Naive thymus-derived CD4-positive, alpha-beta T cell (primary cell): ENCODE measurements at regions of chr14 and their contacts with region 1.

Region 1: DNA sequence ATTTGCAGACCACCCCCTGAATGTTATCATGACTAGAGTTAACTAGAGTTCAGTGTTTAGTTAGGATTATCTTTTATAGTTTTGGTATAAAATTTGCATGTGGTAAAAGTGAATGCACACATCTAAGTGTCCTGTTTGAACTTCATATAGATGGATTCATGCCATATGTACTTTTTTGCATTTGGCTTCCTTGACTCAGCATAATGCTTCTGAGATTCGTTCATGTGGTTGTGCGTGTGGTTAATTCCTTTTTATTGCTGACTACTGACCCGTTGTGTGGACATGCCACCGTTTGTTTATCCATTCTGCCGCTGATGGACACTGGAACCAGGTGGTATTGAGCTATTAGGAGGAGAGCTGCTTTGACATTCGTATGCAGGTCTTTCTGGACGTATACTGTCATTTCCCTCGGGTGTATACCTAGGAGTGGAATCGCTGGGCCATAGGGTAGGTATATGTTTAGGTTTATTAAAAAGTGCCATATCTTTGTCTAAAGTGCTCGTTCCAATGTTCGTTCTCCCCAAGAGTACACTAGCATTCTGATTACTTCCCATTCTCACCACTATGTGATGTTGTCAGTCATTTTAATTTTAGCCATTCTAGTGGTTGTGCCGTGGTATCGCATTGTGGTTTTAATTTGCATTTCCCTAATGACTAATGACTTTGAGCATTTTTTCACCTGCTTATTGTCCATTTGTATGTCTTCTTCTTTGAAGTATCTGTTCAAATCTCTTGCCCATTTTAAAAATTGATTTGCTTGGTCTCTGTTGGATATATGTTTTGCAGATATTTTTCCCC is 37.7 kb downstream of the RIN3 start:
- DNase-seq: no peak
- ATAC-seq: peak; percentile 59
- H3K4me3 ChIP-seq: no peak overlapping the region
- H3K4me3 Mint-ChIP-seq: no peak overlapping the region
- H3K27ac ChIP-seq: no peak overlapping the region
- H3K27ac Mint-ChIP-seq: peak overlapping the region in 3 of 9 donors; percentile 1 to 51 (median 50)
- H3K4me1 ChIP-seq: peaks cover 19 to 20% of the 10 kb centered on the region in 2 donors
- H3K4me1 Mint-ChIP-seq: peaks cover 27 to 54% (median 41%) of the 10 kb centered on the region in 7 donors
- H3K27me3 ChIP-seq: no peaks in the 10 kb centered on the region
- H3K27me3 Mint-ChIP-seq: peaks cover 0 to 10% (median 0%) of the 10 kb centered on the region in 5 donors

Region 2: DNA sequence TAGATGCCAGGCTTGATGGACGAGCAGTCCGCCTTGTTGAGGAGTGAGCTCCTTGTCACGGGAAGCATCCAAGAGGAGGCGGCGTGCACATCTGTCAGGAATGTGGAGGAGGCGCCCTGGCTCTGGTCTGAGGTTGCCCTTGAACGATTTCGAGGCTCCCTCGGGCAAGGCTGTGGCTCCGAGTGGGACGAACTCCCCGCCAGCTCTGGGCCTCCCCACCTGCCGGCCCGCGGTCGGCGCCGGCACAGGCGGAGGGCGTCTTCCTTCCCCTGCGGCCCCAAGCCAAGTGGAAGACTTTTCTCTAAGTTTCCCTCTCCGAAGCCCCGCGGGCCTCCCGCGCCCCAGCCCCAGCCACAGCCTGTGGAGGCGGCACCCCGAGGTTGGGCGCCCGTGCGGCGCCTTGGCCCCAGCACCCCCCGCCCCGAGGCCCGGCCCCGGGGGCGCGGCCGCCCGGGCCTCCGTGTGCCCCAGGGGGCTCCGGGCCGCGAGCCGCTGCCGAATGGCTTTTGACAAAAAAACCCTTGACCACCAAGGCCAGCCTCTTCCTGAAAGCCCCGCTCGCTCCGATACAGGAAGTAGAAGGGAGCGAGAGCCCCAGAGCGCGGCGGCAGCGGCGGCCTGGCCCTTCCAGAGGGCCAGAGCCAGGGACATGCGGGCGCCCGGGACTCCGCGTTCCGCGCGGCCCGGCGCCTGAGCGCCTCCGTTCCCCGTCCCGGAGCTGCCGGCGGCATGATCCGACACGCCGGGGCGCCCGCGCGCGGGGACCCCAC is 37.9 kb before region 1 on chr14 and contains the start of gene RIN3:
- CTCF ChIA-PET with region 1: no interaction called
- POLR2A ChIA-PET with region 1: no interaction called
- intact Hi-C with region 1: loop called in 1 of 2 experiments (anchors 5 kb)
- DNase-seq: peak in 8 of 9 donors; percentile 17 to 43 (median 38)
- ATAC-seq: peak; percentile 71
- H3K4me3 ChIP-seq: peak within 1 kb of the TSS; percentile 76
- H3K4me3 Mint-ChIP-seq: peak within 1 kb of the TSS; percentile 48 to 86 (median 76)
- H3K27ac ChIP-seq: peak within 1 kb of the TSS; percentile 67
- H3K27ac Mint-ChIP-seq: peak within 1 kb of the TSS in 8 of 9 donors; percentile 14 to 71 (median 56)
- H3K4me1 ChIP-seq: peaks cover 25 to 44% of the 10 kb centered on the region in 2 donors
- H3K4me1 Mint-ChIP-seq: peaks cover 21 to 48% (median 34%) of the 10 kb centered on the region in 7 donors
- H3K27me3 ChIP-seq: no peaks in the 10 kb centered on the region
- H3K27me3 Mint-ChIP-seq: peaks cover 0 to 62% (median 0%) of the 10 kb centered on the region in 5 donors
- total RNA-seq, gene RIN3: 45.4 to 182 (median 132) TPM

Region 3: GRCh38 chr14:92540472-92541053 is 10.7 kb before region 1 on chr14:
- CTCF ChIA-PET with region 1: no interaction called
- POLR2A ChIA-PET with region 1: interaction called, 11 read pairs
- intact Hi-C with region 1: no loop called
- DNase-seq: no peak
- ATAC-seq: peak; percentile 24
- H3K4me3 ChIP-seq: no peak overlapping the region
- H3K4me3 Mint-ChIP-seq: peak overlapping the region in 7 of 10 donors; percentile 5 to 71 (median 44)
- H3K27ac ChIP-seq: no peak overlapping the region
- H3K27ac Mint-ChIP-seq: peak overlapping the region in 8 of 9 donors; percentile 2 to 85 (median 32)
- H3K4me1 ChIP-seq: peaks cover 29 to 36% of the 10 kb centered on the region in 2 donors
- H3K4me1 Mint-ChIP-seq: peaks cover 38 to 77% (median 49%) of the 10 kb centered on the region in 7 donors
- H3K27me3 ChIP-seq: no peaks in the 10 kb centered on the region
- H3K27me3 Mint-ChIP-seq: peaks cover 0 to 5% (median 0%) of the 10 kb centered on the region in 5 donors

Region 4: DNA sequence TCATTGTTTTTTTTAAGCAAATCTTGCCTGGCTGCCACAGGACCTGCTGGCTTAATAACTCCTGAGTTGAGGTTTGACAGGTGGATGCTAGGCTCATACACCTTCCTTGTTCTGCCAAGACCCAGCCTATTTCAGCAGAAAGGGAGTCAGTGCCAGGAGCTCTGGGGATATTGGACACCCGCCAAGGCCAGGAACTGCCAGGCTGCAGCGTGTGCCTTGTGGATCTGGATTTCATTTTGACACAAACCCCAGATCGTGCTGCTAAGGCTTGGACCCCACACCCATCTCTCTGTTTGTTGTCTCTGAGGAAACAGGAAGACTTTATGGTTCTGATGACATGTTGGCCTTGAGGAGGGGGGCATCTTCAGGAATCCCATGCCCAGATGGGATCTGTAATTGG is 1281.4 kb after region 1 on chr14:
- CTCF ChIA-PET with region 1: no interaction called
- POLR2A ChIA-PET with region 1: no interaction called
- intact Hi-C with region 1: no loop called
- DNase-seq: no peak
- ATAC-seq: no peak
- H3K4me3 ChIP-seq: no peak overlapping the region
- H3K4me3 Mint-ChIP-seq: no peak overlapping the region
- H3K27ac ChIP-seq: no peak overlapping the region
- H3K27ac Mint-ChIP-seq: no peak overlapping the region
- H3K4me1 ChIP-seq: no peaks in the 10 kb centered on the region
- H3K4me1 Mint-ChIP-seq: no peaks in the 10 kb centered on the region
- H3K27me3 ChIP-seq: no peaks in the 10 kb centered on the region
- H3K27me3 Mint-ChIP-seq: peaks cover 5 to 28% (median 23%) of the 10 kb centered on the region in 5 donors